ENCODE measurements at regions of chr5 and their contacts with region 1.

Region 1: DNA sequence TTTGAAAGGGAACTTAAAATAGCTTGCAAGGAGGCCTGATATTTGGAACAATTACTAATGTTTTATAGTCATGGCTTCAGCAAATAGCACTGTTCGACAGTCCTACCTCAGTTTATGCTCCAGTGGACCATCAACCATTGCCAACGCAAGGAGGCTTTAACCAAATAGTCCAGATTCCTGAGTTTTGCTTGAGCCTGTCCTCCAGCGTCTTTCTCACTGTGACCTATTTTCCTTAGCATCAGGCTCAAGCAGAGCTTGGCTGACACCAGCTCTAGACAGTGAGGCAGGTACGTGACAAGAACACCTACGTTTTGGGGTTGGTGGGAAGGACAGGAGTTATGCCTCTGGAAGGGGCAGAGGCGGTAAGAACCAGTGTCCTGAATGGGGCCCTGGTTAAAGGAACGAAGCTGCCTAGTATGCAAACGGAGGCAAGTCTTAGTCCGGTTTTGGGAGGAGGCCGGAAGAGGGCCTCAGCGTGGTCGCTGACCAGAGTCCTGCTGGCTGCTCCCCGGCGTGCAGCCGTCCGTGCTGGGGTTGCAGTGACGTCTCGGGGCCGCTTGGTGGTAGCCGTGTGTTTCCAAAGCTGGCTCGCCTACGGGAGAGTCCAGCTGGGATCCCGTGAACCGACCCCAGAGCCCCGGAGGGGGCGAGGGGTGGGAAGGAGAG is 998 bp upstream of the FGF18 start:
- DNase-seq: peak; percentile 84 to 90 (median 86)
- ATAC-seq: peak; percentile 94
- H3K4me3 ChIP-seq: no peak overlapping the region
- H3K27ac ChIP-seq: no peak overlapping the region
- H3K4me1 ChIP-seq: peaks cover 9 to 19% of the 10 kb centered on the region in 2 experiments; a peak in 3 of 5 replicates
- H3K27me3 ChIP-seq: no peaks in the 10 kb centered on the region
- CTCF ChIP-seq: peak; percentile 93 to 96 (median 95)
- EP300 ChIP-seq: no peak
- POLR2A ChIP-seq: no peak
- RAD21 ChIP-seq: peak; percentile 93 to 94

Region 2: GRCh38 chr5:171484460-171484899 is 66.0 kb after region 1 on chr5:
- CTCF ChIA-PET with region 1: no interaction called
- POLR2A ChIA-PET with region 1: no interaction called
- in situ Hi-C with region 1: no loop called
- intact Hi-C with region 1: loop called (anchors 5 kb)
- DNase-seq: peak; percentile 57 to 88 (median 86)
- ATAC-seq: peak; percentile 85
- H3K4me3 ChIP-seq: no peak overlapping the region
- H3K27ac ChIP-seq: no peak overlapping the region
- H3K4me1 ChIP-seq: peaks cover 0 to 11% of the 10 kb centered on the region in 2 experiments; a peak in 1 of 5 replicates
- H3K27me3 ChIP-seq: peaks cover 5 to 44% of the 10 kb centered on the region in 2 experiments; a peak in 4 of 5 replicates
- CTCF ChIP-seq: peak; percentile 76 to 88 (median 78)
- EP300 ChIP-seq: no peak
- POLR2A ChIP-seq: no peak
- RAD21 ChIP-seq: peak; percentile 49 to 69

Region 3: GRCh38 chr5:171521219-171521633 is 102.8 kb after region 1 on chr5:
- CTCF ChIA-PET with region 1: no interaction called
- POLR2A ChIA-PET with region 1: no interaction called
- in situ Hi-C with region 1: no loop called
- intact Hi-C with region 1: no loop called
- DNase-seq: no peak
- ATAC-seq: no peak
- H3K4me3 ChIP-seq: no peak overlapping the region
- H3K27ac ChIP-seq: no peak overlapping the region
- H3K4me1 ChIP-seq: peaks cover 0 to 12% of the 10 kb centered on the region in 2 experiments; a peak in 2 of 5 replicates
- H3K27me3 ChIP-seq: peaks cover 39 to 84% of the 10 kb centered on the region in 2 experiments
- CTCF ChIP-seq: no peak
- EP300 ChIP-seq: no peak
- POLR2A ChIP-seq: no peak
- RAD21 ChIP-seq: no peak

Region 4: DNA sequence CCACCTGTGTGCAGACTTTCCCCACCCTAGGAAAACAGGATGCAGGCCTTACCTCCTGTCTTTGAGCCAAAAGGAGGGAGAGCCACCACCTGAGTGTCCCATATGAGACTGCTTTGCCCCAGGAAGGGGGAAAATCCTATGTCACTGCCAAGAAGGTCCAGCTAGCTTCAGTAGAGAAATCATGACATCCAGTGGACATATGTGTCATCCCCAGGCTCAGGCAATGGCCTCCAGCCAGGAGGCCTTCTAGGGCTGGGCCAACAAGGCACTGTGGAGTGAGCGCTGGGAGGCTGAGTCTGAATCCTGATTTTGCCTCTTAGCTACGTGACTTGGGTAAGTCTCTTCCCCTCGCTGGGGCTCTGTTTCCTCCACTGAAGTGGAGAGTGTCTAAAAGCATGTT is 427.4 kb after region 1 on chr5:
- CTCF ChIA-PET with region 1: no interaction called
- POLR2A ChIA-PET with region 1: interaction called, 4 read pairs
- in situ Hi-C with region 1: no loop called
- intact Hi-C with region 1: loop called (anchors 5 kb)
- DNase-seq: peak in 2 of 4 experiments; percentile 15 to 18
- ATAC-seq: peak; percentile 50
- H3K4me3 ChIP-seq: no peak overlapping the region
- H3K27ac ChIP-seq: no peak overlapping the region
- H3K4me1 ChIP-seq: peaks cover 12 to 15% of the 10 kb centered on the region in 2 experiments; a peak in 4 of 5 replicates
- H3K27me3 ChIP-seq: no peaks in the 10 kb centered on the region
- CTCF ChIP-seq: peak; percentile 11 to 26 (median 22); a peak in 1 of 6 replicates
- EP300 ChIP-seq: no peak
- POLR2A ChIP-seq: no peak
- RAD21 ChIP-seq: peak in 1 of 2 experiments; percentile 57; a peak in 2 of 4 replicates

Region 5: GRCh38 chr5:172035039-172035438 is 616.6 kb after region 1 on chr5:
- CTCF ChIA-PET with region 1: no interaction called
- POLR2A ChIA-PET with region 1: no interaction called
- in situ Hi-C with region 1: loop called (anchors 10 kb)
- intact Hi-C with region 1: no loop called
- DNase-seq: no peak
- ATAC-seq: no peak; the same call in 2 of the 3 replicates
- H3K4me3 ChIP-seq: no peak overlapping the region
- H3K27ac ChIP-seq: no peak overlapping the region
- H3K4me1 ChIP-seq: no peaks in the 10 kb centered on the region
- H3K27me3 ChIP-seq: peaks cover 0 to 4% of the 10 kb centered on the region in 2 experiments; a peak in 2 of 5 replicates
- CTCF ChIP-seq: no peak
- EP300 ChIP-seq: no peak
- POLR2A ChIP-seq: no peak
- RAD21 ChIP-seq: no peak

Region 6: DNA sequence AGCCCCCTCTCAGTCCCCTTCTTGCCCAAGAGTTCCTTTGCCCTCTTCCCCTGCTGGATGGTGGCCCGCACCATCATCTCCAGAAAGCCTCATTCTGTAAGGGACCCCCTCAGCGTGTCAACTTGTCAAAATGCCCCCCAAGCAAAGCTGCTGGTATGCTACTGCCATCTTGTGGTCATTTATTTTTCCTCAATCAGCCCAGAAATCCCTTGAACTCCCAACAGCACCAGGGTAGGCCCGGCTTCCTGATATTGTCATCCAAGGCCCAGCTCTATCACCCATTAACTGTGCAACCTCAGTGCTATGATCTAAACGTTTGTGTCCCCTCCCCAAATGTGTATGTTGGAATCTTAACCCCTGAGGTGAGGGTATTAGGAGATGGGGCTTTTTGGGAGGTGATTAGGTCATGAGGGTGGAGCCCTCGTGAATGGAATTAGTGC is 641.2 kb after region 1 on chr5:
- CTCF ChIA-PET with region 1: no interaction called
- POLR2A ChIA-PET with region 1: no interaction called
- in situ Hi-C with region 1: loop called (anchors 10 kb)
- intact Hi-C with region 1: loop called (anchors 5 kb)
- DNase-seq: peak; percentile 38 to 51 (median 51)
- ATAC-seq: peak; percentile 84
- H3K4me3 ChIP-seq: no peak overlapping the region
- H3K27ac ChIP-seq: no peak overlapping the region
- H3K4me1 ChIP-seq: peaks cover 0 to 7% of the 10 kb centered on the region in 2 experiments; a peak in 3 of 5 replicates
- H3K27me3 ChIP-seq: peaks cover 0 to 7% of the 10 kb centered on the region in 2 experiments; a peak in 1 of 5 replicates
- CTCF ChIP-seq: peak; percentile 70 to 82 (median 78)
- EP300 ChIP-seq: no peak
- POLR2A ChIP-seq: no peak
- RAD21 ChIP-seq: peak; percentile 65 to 82

Region 7: DNA sequence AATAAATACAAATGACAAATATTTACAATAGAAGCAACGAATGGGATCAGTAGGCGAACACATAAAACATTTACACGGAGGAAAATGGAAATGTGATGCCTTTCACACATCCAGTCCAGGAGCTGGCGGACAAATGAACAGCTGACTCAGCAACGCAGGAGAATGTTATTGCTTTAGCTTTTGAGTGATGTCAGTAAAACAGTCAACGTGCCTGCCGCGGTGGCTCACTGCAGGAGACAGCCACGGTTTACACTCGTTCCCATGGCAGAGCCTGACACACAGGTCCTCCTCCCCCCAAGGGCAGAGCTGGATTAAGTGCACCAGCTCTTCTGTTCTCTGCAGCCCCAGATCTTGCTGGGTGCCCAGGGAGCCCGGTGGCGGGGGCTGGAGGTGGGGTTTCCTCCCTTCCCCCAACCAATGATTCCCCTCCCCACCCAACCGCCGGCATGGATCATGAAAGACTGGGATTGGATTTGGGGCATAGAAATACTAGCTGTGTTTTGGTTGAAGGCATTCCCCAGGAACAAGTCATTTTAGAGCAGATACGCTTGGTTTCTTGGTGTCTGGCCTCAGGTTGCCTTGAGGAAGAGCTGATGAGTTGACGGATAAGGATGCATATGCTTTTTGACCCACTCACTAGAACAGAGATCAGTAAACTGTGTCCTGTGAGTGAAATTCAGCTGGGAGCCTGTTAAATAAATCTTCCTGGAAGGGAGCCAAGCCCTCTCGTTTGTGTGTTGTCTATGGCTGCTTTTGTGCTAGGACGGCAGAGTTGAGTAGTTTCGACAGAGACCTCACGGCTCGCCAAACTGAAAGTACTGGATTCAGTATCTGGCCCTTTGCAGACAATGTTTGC is 1897.3 kb after region 1 on chr5:
- CTCF ChIA-PET with region 1: no interaction called
- POLR2A ChIA-PET with region 1: no interaction called
- in situ Hi-C with region 1: no loop called
- intact Hi-C with region 1: no loop called
- DNase-seq: peak in 1 of 4 experiments; percentile 31
- ATAC-seq: peak; percentile 48
- H3K4me3 ChIP-seq: no peak overlapping the region
- H3K27ac ChIP-seq: no peak overlapping the region
- H3K4me1 ChIP-seq: peaks cover 3 to 22% of the 10 kb centered on the region in 2 experiments; a peak in 3 of 5 replicates
- H3K27me3 ChIP-seq: no peaks in the 10 kb centered on the region
- CTCF ChIP-seq: no peak
- EP300 ChIP-seq: no peak
- POLR2A ChIP-seq: no peak
- RAD21 ChIP-seq: no peak